ENCODE measurements at regions of chr13 and their contacts with region 1.

Region 1: GRCh38 chr13:44758630-44759383 is 182.7 kb upstream of the TSC22D1 start:
- DNase-seq: peak; percentile 88
- ATAC-seq: peak; percentile 97
- H3K4me3 ChIP-seq: peak overlapping the region; percentile 32; the same call in 1 of the 2 replicates
- H3K27ac ChIP-seq: peak overlapping the region; percentile 94
- H3K4me1 ChIP-seq: peaks cover 45% of the 10 kb centered on the region
- H3K27me3 ChIP-seq: no peaks in the 10 kb centered on the region
- CTCF ChIP-seq: no peak

Region 2: GRCh38 chr13:44523146-44524015 is 235.4 kb before region 1 on chr13:
- CTCF ChIA-PET with region 1: no interaction called
- POLR2A ChIA-PET with region 1: no interaction called
- intact Hi-C with region 1: no loop called
- DNase-seq: peak; percentile 72
- ATAC-seq: peak; percentile 96
- H3K4me3 ChIP-seq: peak overlapping the region; percentile 59
- H3K27ac ChIP-seq: peak overlapping the region; percentile 78
- H3K4me1 ChIP-seq: peaks cover 24% of the 10 kb centered on the region
- H3K27me3 ChIP-seq: no peaks in the 10 kb centered on the region
- CTCF ChIP-seq: no peak

Region 3: GRCh38 chr13:44577236-44578066 is 181.4 kb before region 1 on chr13:
- CTCF ChIA-PET with region 1: interaction called, 4 read pairs
- POLR2A ChIA-PET with region 1: no interaction called
- intact Hi-C with region 1: loop called (anchors 5 kb)
- DNase-seq: peak; percentile 93
- ATAC-seq: peak; percentile 68
- H3K4me3 ChIP-seq: peak overlapping the region; percentile 84
- H3K27ac ChIP-seq: peak overlapping the region; percentile 80
- H3K4me1 ChIP-seq: peaks cover 36% of the 10 kb centered on the region
- H3K27me3 ChIP-seq: no peaks in the 10 kb centered on the region
- CTCF ChIP-seq: no peak

Region 4: GRCh38 chr13:44692173-44692713 is 66.6 kb before region 1 on chr13:
- CTCF ChIA-PET with region 1: no interaction called
- POLR2A ChIA-PET with region 1: no interaction called
- intact Hi-C with region 1: no loop called
- DNase-seq: peak; percentile 33
- ATAC-seq: no peak
- H3K4me3 ChIP-seq: no peak overlapping the region
- H3K27ac ChIP-seq: no peak overlapping the region
- H3K4me1 ChIP-seq: no peaks in the 10 kb centered on the region
- H3K27me3 ChIP-seq: no peaks in the 10 kb centered on the region
- CTCF ChIP-seq: no peak

Region 5: DNA sequence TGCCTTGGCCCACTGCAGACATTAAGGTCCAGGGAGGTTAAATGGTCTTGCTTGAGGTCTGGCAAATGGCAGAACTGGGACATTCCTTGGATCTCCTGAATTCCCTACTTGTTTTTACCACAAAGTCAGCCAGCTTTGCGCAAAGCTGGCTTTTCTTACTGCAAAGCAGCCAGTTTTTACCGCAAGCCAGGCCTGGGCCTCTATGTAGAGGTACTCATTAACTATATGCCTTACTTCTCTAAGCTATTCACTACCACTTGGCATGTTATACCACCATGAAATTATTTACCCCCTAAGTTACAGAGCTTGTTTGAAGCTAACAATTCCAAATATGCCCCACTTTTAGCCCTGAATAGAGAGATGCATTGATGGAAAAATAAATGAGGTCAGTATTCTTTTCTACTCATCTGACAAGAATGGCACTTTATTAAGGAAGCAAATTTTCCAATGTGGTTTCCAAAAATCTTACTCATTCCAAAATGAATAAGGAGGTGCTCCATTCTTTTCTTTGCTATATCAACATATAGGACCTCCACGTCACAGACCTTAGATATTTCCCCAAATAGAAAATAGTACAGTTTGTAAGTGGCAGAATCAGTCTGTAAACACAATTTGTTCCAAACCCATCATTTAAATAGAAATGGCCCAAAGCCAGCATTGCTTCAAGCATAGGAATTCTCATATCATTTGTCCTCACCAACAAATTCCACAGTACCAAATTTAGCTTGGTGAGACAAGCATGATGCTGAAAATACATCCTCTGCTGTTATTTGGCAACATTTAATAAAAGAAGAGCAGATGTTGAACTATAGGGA is 38.7 kb before region 1 on chr13:
- CTCF ChIA-PET with region 1: no interaction called
- POLR2A ChIA-PET with region 1: no interaction called
- intact Hi-C with region 1: loop called (anchors 1 kb)
- DNase-seq: peak; percentile 74
- ATAC-seq: peak; percentile 56
- H3K4me3 ChIP-seq: no peak overlapping the region
- H3K27ac ChIP-seq: peak overlapping the region; percentile 56
- H3K4me1 ChIP-seq: peaks cover 22% of the 10 kb centered on the region
- H3K27me3 ChIP-seq: no peaks in the 10 kb centered on the region
- CTCF ChIP-seq: no peak

Region 6: DNA sequence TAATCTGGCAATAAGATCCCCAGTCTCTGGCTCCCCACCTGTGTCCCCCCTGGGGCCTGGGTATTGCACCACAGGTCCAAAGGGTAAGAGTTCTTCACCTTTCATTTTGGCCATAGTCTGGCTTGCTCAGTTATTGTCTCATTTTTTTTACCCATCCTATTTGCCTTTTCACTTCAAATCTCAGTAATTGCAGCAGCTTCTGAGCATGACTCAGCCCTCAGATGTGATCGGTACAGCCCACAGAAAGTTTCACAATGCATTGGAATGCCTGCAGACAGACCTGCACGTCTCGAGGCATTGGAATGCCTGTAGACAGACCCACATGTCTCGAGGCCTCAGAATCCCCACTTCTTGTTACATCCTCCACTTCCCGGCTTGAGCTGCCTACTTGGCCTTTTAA is 56.8 kb after region 1 on chr13:
- CTCF ChIA-PET with region 1: no interaction called
- POLR2A ChIA-PET with region 1: no interaction called
- intact Hi-C with region 1: loop called (anchors 5 kb)
- DNase-seq: peak; percentile 91
- ATAC-seq: peak; percentile 81
- H3K4me3 ChIP-seq: no peak overlapping the region
- H3K27ac ChIP-seq: peak overlapping the region; percentile 95
- H3K4me1 ChIP-seq: peaks cover 66% of the 10 kb centered on the region
- H3K27me3 ChIP-seq: no peaks in the 10 kb centered on the region
- CTCF ChIP-seq: no peak

Measured in PC-3 (cell line).